ENCODE measurements at regions of chr3 and their contacts with region 1.

Region 1: DNA sequence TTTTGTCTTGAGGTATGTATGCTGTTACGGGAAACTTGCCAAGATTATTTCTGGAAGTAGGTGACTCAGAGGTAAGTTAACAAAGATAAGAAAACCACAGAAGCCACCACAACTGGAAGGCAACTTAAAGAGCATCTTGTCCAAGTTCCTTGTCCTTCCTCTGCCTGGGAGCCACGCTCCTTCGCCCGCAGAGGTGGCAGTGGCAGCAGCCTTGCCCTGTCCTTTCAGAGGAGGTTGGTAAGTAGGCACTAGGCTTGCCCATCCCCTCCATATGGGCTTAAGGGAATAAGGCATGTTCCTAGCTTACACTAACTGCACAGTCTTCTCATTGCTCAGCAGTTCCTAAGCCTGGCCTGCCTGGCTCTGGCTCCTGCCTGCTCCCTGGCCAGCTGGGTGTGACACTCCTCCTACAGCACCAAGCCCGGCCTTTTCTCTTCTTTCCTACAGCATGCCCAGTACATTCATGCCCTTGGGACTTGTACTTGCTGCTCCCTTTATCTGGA is 48.0 kb upstream of the RAB6B start:
- DNase-seq: no peak
- ATAC-seq: peak in 2 of 8 donors; percentile 11 to 19
- H3K4me3 ChIP-seq: no peak overlapping the region
- H3K27ac ChIP-seq: peak overlapping the region in 2 of 10 donors; percentile 44 to 81
- H3K4me1 ChIP-seq: peaks cover 11 to 64% (median 49%) of the 10 kb centered on the region in 9 donors
- H3K27me3 ChIP-seq: no peaks in the 10 kb centered on the region
- CTCF ChIP-seq: no peak

Region 2: GRCh38 chr3:133895208-133896001 is 48.3 kb before region 1 on chr3 and contains the start of gene RAB6B:
- intact Hi-C with region 1: no loop called
- DNase-seq: peak; percentile 46 to 64
- ATAC-seq: peak; percentile 70 to 89 (median 82)
- H3K4me3 ChIP-seq: peak within 1 kb of the TSS; percentile 44 to 90 (median 70)
- H3K27ac ChIP-seq: peak within 1 kb of the TSS in 9 of 10 donors; percentile 31 to 73 (median 51)
- H3K4me1 ChIP-seq: peaks cover 14 to 49% (median 23%) of the 10 kb centered on the region in 9 donors
- H3K27me3 ChIP-seq: peaks cover 0 to 52% (median 8%) of the 10 kb centered on the region in 7 donors
- CTCF ChIP-seq: no peak
- total RNA-seq, gene RAB6B: 39.2 to 73.8 (median 47.4) TPM

Region 3: GRCh38 chr3:133991637-133992036 is 47.9 kb after region 1 on chr3:
- intact Hi-C with region 1: loop called in 3 of 10 experiments (anchors 5 kb)
- DNase-seq: no peak
- ATAC-seq: peak in 7 of 8 donors; percentile 10 to 49 (median 24)
- H3K4me3 ChIP-seq: no peak overlapping the region
- H3K27ac ChIP-seq: peak overlapping the region in 7 of 10 donors; percentile 27 to 61 (median 33)
- H3K4me1 ChIP-seq: peaks cover 9 to 58% (median 20%) of the 10 kb centered on the region in 9 donors
- H3K27me3 ChIP-seq: peaks cover 0 to 16% (median 0%) of the 10 kb centered on the region in 7 donors
- CTCF ChIP-seq: no peak

Region 4: GRCh38 chr3:134029734-134030378 is 86.2 kb after region 1 on chr3 and contains the start of gene SLCO2A1:
- intact Hi-C with region 1: loop called in 5 of 10 experiments (anchors 5 to 10 kb)
- DNase-seq: peak; percentile 29 to 32
- ATAC-seq: peak; percentile 47 to 68 (median 55)
- H3K4me3 ChIP-seq: peak within 1 kb of the TSS; percentile 24 to 71 (median 60)
- H3K27ac ChIP-seq: peak within 1 kb of the TSS in 5 of 10 donors; percentile 29 to 60 (median 31)
- H3K4me1 ChIP-seq: peaks cover 0 to 27% (median 6%) of the 10 kb centered on the region in 9 donors
- H3K27me3 ChIP-seq: peaks cover 0 to 40% (median 16%) of the 10 kb centered on the region in 7 donors
- CTCF ChIP-seq: no peak
- total RNA-seq, gene SLCO2A1: 3.6 to 30.4 (median 8.4) TPM

Region 5: GRCh38 chr3:134039161-134039862 is 95.6 kb after region 1 on chr3:
- intact Hi-C with region 1: loop called in 5 of 10 experiments (anchors 5 to 10 kb)
- DNase-seq: no peak
- ATAC-seq: peak; percentile 49 to 82 (median 66)
- H3K4me3 ChIP-seq: no peak overlapping the region
- H3K27ac ChIP-seq: no peak overlapping the region
- H3K4me1 ChIP-seq: peaks cover 0 to 10% (median 0%) of the 10 kb centered on the region in 9 donors
- H3K27me3 ChIP-seq: no peaks in the 10 kb centered on the region
- CTCF ChIP-seq: peak in 8 of 9 donors; percentile 10 to 53 (median 40)